Endothelial cell of umbilical vein (primary cell): ENCODE measurements at regions of chr13 and their contacts with region 1.

Region 1: GRCh38 chr13:29508130-29508875 is 87.2 kb downstream of the SLC7A1 start:
- DNase-seq: peak; percentile 84
- H3K4me3 ChIP-seq: no peak overlapping the region
- H3K27ac ChIP-seq: no peak overlapping the region
- H3K4me1 ChIP-seq: no peaks in the 10 kb centered on the region
- H3K27me3 ChIP-seq: peaks cover 4 to 7% of the 10 kb centered on the region in 2 experiments
- CTCF ChIP-seq: peak; percentile 94 to 97
- POLR2A ChIP-seq: no peak

Region 2: GRCh38 chr13:29105777-29106176 is 402.5 kb before region 1 on chr13:
- CTCF ChIA-PET with region 1: no interaction called
- POLR2A ChIA-PET with region 1: no interaction called
- dilution Hi-C with region 1: no loop called
- intact Hi-C with region 1: no loop called
- DNase-seq: no peak
- H3K4me3 ChIP-seq: no peak overlapping the region
- H3K27ac ChIP-seq: no peak overlapping the region
- H3K4me1 ChIP-seq: no peaks in the 10 kb centered on the region
- H3K27me3 ChIP-seq: no peaks in the 10 kb centered on the region
- CTCF ChIP-seq: peak in 1 of 2 donors; percentile 8
- POLR2A ChIP-seq: no peak

Region 3: GRCh38 chr13:29294821-29295220 is 213.5 kb before region 1 on chr13:
- CTCF ChIA-PET with region 1: no interaction called
- POLR2A ChIA-PET with region 1: no interaction called
- dilution Hi-C with region 1: no loop called
- intact Hi-C with region 1: no loop called
- DNase-seq: no peak
- H3K4me3 ChIP-seq: no peak overlapping the region
- H3K27ac ChIP-seq: no peak overlapping the region
- H3K4me1 ChIP-seq: no peaks in the 10 kb centered on the region
- H3K27me3 ChIP-seq: no peaks in the 10 kb centered on the region
- CTCF ChIP-seq: no peak
- POLR2A ChIP-seq: no peak

Region 4: GRCh38 chr13:29529754-29530153 is 21.5 kb after region 1 on chr13:
- CTCF ChIA-PET with region 1: interaction called, 20 read pairs
- POLR2A ChIA-PET with region 1: no interaction called
- dilution Hi-C with region 1: no loop called
- intact Hi-C with region 1: no loop called
- DNase-seq: no peak
- H3K4me3 ChIP-seq: no peak overlapping the region
- H3K27ac ChIP-seq: no peak overlapping the region
- H3K4me1 ChIP-seq: no peaks in the 10 kb centered on the region
- H3K27me3 ChIP-seq: no peaks in the 10 kb centered on the region
- CTCF ChIP-seq: no peak
- POLR2A ChIP-seq: no peak

Region 5: DNA sequence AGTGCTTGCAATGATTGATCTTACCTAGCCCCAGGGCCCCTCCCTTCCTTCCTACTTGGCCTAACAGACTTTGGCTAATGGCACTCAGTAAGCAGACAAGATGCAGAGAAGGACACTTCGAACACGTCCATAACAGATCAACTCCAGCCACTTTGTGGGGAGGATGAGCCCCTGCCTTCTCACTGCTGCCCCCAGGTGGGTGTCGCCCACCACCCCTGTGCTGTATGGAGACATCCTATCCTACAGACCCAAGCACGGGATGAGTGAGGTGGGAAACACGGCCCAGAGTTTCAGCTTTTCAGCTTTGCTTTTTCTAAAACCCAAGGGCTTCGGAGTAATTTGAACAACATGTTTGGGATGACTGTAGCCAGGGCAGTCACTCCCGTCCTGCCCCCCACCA is 81.7 kb after region 1 on chr13:
- CTCF ChIA-PET with region 1: interaction called, 15 read pairs
- POLR2A ChIA-PET with region 1: no interaction called
- dilution Hi-C with region 1: no loop called
- intact Hi-C with region 1: loop called (anchors 1 kb)
- DNase-seq: no peak
- H3K4me3 ChIP-seq: no peak overlapping the region
- H3K27ac ChIP-seq: no peak overlapping the region
- H3K4me1 ChIP-seq: peaks cover 18% of the 10 kb centered on the region
- H3K27me3 ChIP-seq: no peaks in the 10 kb centered on the region
- CTCF ChIP-seq: peak in 1 of 2 donors; percentile 29
- POLR2A ChIP-seq: no peak

Region 6: GRCh38 chr13:29696606-29697005 is 188.3 kb after region 1 on chr13:
- CTCF ChIA-PET with region 1: interaction called, 301 read pairs
- POLR2A ChIA-PET with region 1: no interaction called
- dilution Hi-C with region 1: no loop called
- intact Hi-C with region 1: no loop called
- DNase-seq: no peak
- H3K4me3 ChIP-seq: no peak overlapping the region
- H3K27ac ChIP-seq: no peak overlapping the region
- H3K4me1 ChIP-seq: no peaks in the 10 kb centered on the region
- H3K27me3 ChIP-seq: peaks cover 0 to 4% of the 10 kb centered on the region in 2 experiments
- CTCF ChIP-seq: no peak
- POLR2A ChIP-seq: no peak

Region 7: GRCh38 chr13:29713839-29714238 is 205.5 kb after region 1 on chr13:
- CTCF ChIA-PET with region 1: interaction called, 301 read pairs
- POLR2A ChIA-PET with region 1: no interaction called
- dilution Hi-C with region 1: no loop called
- intact Hi-C with region 1: loop called (anchors 1 kb)
- DNase-seq: peak; percentile 22
- H3K4me3 ChIP-seq: no peak overlapping the region
- H3K27ac ChIP-seq: no peak overlapping the region
- H3K4me1 ChIP-seq: no peaks in the 10 kb centered on the region
- H3K27me3 ChIP-seq: peaks cover 19 to 22% of the 10 kb centered on the region in 2 experiments
- CTCF ChIP-seq: peak; percentile 55 to 76
- POLR2A ChIP-seq: no peak